ENCODE measurements at regions of chr6 and their contacts with region 1.

Region 1: DNA sequence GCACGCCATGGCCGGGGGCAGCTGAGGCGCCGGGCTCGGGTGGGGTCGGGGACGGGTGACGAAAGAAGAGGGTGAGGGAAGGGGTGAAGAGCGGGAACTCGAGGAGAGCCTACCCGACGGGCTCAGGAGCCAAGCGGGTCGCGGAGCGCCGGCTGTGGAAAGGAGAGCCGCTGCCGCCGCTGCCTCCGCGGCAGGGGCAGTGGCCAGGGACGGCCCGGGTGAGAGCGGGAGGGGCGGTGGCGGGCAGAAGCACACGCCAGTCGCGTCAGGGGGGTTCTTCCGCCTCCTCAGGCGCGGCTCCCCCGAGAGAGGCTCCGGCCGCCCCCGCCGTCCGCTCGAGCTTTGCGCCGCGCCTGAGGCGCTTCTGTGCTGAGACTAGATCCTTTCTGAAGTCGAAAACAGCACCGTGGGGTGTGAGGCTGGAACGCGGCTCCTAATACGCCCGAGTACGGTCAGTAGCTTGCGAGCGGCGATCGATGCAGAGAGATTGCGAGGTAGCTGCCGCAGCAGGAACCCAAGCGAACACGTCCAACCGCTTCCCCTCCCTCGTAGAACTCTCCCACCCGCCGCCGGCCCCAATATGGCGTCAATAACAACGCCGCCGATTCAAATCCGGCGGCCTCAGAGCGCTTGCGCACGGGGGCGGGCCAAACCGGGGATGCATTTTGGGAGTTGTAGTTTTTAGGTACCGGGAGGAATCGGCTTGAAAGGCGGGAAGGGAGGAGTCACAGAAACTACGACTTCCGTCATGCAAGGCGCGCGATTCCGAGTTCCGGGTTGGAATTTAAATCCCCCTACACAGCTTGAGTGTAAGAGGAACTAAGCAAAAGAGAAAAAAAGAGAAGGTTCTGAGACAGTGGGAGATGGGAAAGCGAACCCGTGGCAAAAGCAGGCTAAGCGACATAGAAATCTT is at the start of gene AKIRIN2:
- DNase-seq: peak; percentile 92 to 98
- H3K4me3 ChIP-seq: peak within 1 kb of the TSS; percentile 92 to 97
- H3K27ac ChIP-seq: peak within 1 kb of the TSS; percentile 96 to 99
- H3K4me1 ChIP-seq: peaks cover 0 to 7% of the 10 kb centered on the region in 2 donors
- H3K27me3 ChIP-seq: no peaks in the 10 kb centered on the region
- CTCF ChIP-seq: no peak
- total RNA-seq, gene AKIRIN2: 39.1 TPM

Region 2: GRCh38 chr6:87407901-87408720 is 293.8 kb before region 1 on chr6 and contains the start of gene CFAP206:
- intact Hi-C with region 1: loop called (anchors 2 kb)
- DNase-seq: peak; percentile 21 to 88
- H3K4me3 ChIP-seq: peak within 1 kb of the TSS; percentile 84 to 93
- H3K27ac ChIP-seq: peak within 1 kb of the TSS; percentile 75 to 83
- H3K4me1 ChIP-seq: no peaks in the 10 kb centered on the region
- H3K27me3 ChIP-seq: no peaks in the 10 kb centered on the region
- CTCF ChIP-seq: peak in 1 of 3 experiments; percentile 5
- total RNA-seq, gene CFAP206: 1.4 TPM

Region 3: GRCh38 chr6:87589693-87590549 is 112.0 kb before region 1 on chr6 and contains the starts of genes ORC3 and RARS2:
- intact Hi-C with region 1: loop called (anchors 2 kb)
- DNase-seq: peak; percentile 88 to 98
- H3K4me3 ChIP-seq: peak within 1 kb of the TSS; percentile 83 to 94
- H3K27ac ChIP-seq: peak within 1 kb of the TSS; percentile 72 to 85
- H3K4me1 ChIP-seq: peaks cover 3 to 21% of the 10 kb centered on the region in 2 donors
- H3K27me3 ChIP-seq: no peaks in the 10 kb centered on the region
- CTCF ChIP-seq: no peak
- total RNA-seq, gene ORC3: 12.9 TPM
- total RNA-seq, gene RARS2: 1.7 TPM

Region 4: DNA sequence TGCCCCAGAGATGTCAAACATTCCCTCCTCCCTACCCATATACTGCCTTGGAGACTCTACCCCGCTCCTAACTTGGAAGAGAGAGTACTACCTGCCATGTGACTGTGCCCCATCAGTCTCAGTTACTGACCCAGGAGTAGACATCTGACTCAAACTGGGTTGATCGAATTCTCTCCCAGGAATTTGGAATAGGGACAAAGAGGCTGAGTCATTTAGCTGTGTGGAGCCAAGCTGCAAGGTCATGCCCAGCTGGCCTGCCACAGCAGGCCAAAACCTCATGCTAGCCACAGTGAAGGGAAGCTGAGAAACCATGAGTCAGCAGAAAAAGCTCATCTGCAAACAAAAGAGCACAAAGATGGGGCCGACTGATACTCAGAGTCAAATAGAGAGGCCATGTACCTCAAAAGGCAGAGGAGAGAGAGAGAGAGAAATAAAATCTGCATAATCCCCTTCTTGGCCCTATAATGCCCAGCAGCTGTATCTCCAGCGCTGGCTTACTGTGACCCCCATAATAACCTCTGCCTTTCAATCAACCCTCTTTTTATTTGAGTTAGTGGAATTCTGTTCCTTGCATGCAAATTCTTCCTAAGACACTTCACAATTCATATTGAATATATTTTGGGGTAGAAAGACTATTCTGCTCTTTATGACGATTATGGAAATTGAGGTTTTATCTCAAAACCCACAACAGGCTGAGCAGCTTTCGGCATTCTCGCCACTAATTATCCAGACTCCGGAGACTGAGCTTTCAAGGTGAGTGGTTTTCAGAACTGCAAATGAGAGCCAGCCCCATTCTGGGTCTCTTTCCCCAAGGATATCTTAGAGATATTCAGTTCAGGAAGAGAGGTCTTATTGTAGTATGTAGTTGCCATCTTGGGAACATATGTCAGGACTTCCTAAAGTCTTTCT is 21.5 kb after region 1 on chr6:
- intact Hi-C with region 1: loop called (anchors 2 kb)
- DNase-seq: peak; percentile 48 to 85
- H3K4me3 ChIP-seq: no peak overlapping the region
- H3K27ac ChIP-seq: peak overlapping the region in 1 of 2 donors; percentile 10
- H3K4me1 ChIP-seq: peaks cover 0 to 8% of the 10 kb centered on the region in 2 donors
- H3K27me3 ChIP-seq: no peaks in the 10 kb centered on the region
- CTCF ChIP-seq: no peak